Activated naive CD4-positive, alpha-beta T cell treated with anti-CD3 and anti-CD28 coated beads for 36 hours (primary cell): ENCODE measurements at regions of chr12 and their contacts with region 1.

Region 1: DNA sequence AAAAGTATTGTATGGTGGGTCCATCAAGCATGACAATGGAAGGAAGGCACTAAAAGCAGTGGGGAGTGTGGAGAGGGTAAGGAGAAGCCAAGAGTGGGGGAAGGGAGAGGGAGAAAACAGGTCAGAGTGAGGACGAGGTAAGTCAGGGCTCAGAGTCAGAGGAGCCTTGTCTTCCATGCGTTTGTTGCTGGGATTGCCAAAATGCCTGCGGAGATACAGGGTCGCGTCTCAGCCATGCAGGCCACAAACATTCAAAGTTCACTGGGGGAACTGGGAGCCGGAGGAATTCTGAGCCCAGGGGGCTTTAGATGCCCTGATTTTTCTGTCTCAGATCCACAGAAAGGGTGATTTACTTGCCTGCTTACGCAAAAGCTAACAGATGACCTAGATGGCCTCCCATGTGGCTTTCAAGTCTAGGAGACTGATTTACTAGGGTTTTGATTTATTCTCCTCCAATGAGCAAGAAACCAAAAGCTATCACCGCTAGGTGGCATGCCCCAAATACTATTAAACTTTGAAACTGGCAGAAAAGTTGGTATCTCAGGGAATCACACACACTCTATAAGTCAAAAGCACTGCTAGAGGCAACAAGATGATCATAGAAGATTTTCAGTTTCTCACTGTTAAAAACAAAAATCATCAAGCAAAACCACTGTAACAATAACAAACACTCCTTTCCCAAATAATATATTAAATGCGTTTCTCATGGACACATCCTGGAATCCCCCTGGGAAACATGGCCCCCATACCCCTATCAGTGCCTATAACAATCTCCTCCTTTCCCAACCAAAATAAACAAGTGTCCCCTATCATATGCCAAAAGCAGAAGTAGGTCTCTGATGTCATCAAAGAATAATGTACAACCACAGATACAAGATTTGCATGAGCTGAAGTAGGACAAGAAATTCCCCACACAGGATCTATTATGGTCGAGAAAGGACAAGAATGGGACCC is 26.6 kb upstream of the MDM1 start:
- DNase-seq: peak; percentile 84
- H3K4me3 Mint-ChIP-seq: no peak overlapping the region
- H3K27ac Mint-ChIP-seq: peak overlapping the region; percentile 10
- H3K4me1 Mint-ChIP-seq: peaks cover 25% of the 10 kb centered on the region
- H3K27me3 Mint-ChIP-seq: no peaks in the 10 kb centered on the region

Region 2: GRCh38 chr12:67394550-67394949 is 964.3 kb before region 1 on chr12:
- CTCF ChIA-PET with region 1: no interaction called
- intact Hi-C with region 1: no loop called
- DNase-seq: no peak
- H3K4me3 Mint-ChIP-seq: no peak overlapping the region
- H3K27ac Mint-ChIP-seq: no peak overlapping the region
- H3K4me1 Mint-ChIP-seq: no peaks in the 10 kb centered on the region
- H3K27me3 Mint-ChIP-seq: no peaks in the 10 kb centered on the region

Region 3: GRCh38 chr12:68665016-68665569 is 306.3 kb after region 1 on chr12:
- CTCF ChIA-PET with region 1: no interaction called
- intact Hi-C with region 1: loop called (anchors 2 kb)
- DNase-seq: no peak
- H3K4me3 Mint-ChIP-seq: no peak overlapping the region
- H3K27ac Mint-ChIP-seq: no peak overlapping the region
- H3K4me1 Mint-ChIP-seq: peaks cover 30% of the 10 kb centered on the region
- H3K27me3 Mint-ChIP-seq: no peaks in the 10 kb centered on the region

Region 4: GRCh38 chr12:68745904-68746571 is 387.2 kb after region 1 on chr12 and contains the start of gene SLC35E3:
- CTCF ChIA-PET with region 1: no interaction called
- intact Hi-C with region 1: loop called (anchors 1 kb)
- DNase-seq: peak; percentile 93
- H3K4me3 Mint-ChIP-seq: peak within 1 kb of the TSS; percentile 95
- H3K27ac Mint-ChIP-seq: peak within 1 kb of the TSS; percentile 74
- H3K4me1 Mint-ChIP-seq: peaks cover 22% of the 10 kb centered on the region
- H3K27me3 Mint-ChIP-seq: no peaks in the 10 kb centered on the region
- total RNA-seq, gene SLC35E3: 2.8 to 3.1 TPM